ENCODE measurements at regions of chr10 and their contacts with region 1.

Region 1: GRCh38 chr10:70832852-70833528 is 17.2 kb downstream of the SGPL1 start:
- DNase-seq: no peak
- H3K4me3 Mint-ChIP-seq: no peak overlapping the region
- H3K27ac Mint-ChIP-seq: no peak overlapping the region
- H3K4me1 Mint-ChIP-seq: peaks cover 47% of the 10 kb centered on the region
- H3K27me3 Mint-ChIP-seq: no peaks in the 10 kb centered on the region
- CTCF ChIP-seq: no peak

Region 2: DNA sequence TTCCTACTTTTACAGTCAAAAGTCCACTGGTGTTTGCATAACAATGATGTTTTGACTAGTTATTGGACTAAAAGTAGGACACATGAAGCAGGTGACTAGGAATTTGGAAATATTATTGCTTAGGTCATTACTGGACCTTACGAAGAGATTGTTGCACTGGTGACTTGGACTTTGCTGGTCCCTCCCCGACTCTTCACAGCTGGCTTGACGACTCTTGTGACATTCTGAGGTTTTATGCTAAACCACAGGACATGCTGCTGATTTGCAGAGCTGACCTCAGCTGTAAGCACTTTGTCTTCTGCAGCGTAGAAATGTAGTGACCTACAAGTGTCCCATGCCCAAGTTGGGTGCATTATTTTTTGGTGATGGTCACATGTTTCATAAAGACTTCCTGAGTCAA is 33.4 kb after region 1 on chr10:
- CTCF ChIA-PET with region 1: interaction called, 3 read pairs
- intact Hi-C with region 1: loop called (anchors 5 kb)
- DNase-seq: peak; percentile 18
- H3K4me3 Mint-ChIP-seq: no peak overlapping the region
- H3K27ac Mint-ChIP-seq: no peak overlapping the region
- H3K4me1 Mint-ChIP-seq: peaks cover 35% of the 10 kb centered on the region
- H3K27me3 Mint-ChIP-seq: no peaks in the 10 kb centered on the region
- CTCF ChIP-seq: no peak